GM12878 (cell line): ENCODE measurements at regions of chr20 and their contacts with region 1.

Region 1: DNA sequence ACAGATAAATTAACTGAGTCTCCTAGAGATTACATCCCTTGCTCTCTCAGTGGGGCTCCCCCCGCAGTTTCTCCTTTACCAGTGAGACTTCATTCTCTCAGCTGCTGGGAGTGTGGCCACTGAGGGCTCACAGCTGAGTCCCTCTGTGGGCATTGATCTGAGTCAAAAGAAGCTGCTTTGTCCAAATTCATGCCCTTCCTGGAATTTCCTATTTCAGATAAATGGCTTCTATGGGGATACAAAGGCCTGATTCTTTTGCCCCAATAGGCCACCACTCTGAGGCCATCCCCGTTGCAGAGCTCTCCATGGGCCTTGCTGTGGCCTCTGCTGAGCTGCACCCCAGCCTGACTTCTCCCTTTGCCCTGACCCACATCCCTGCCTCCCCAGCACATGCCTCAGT is 10.0 kb downstream of the CST5 start:
- DNase-seq: no peak
- ATAC-seq: no peak
- H3K4me3 ChIP-seq: no peak overlapping the region
- H3K27ac ChIP-seq: no peak overlapping the region
- H3K4me1 ChIP-seq: no peaks in the 10 kb centered on the region
- H3K27me3 ChIP-seq: peaks cover 0 to under 1% of the 10 kb centered on the region in 2 experiments; a peak in 3 of 4 replicates
- CTCF ChIP-seq: no peak
- EP300 ChIP-seq: no peak
- POLR2A ChIP-seq: no peak
- RAD21 ChIP-seq: no peak

Region 2: GRCh38 chr20:23800878-23801277 is 68.6 kb before region 1 on chr20:
- CTCF ChIA-PET with region 1: no interaction called
- POLR2A ChIA-PET with region 1: no interaction called
- RAD21 ChIA-PET with region 1: no interaction called
- SMC1A ChIA-PET with region 1: no interaction called
- in situ Hi-C with region 1: loop called (anchors 10 kb)
- intact Hi-C with region 1: no loop called
- DNase-seq: no peak
- ATAC-seq: no peak
- H3K4me3 ChIP-seq: no peak overlapping the region
- H3K27ac ChIP-seq: no peak overlapping the region
- H3K4me1 ChIP-seq: no peaks in the 10 kb centered on the region
- H3K27me3 ChIP-seq: no peaks in the 10 kb centered on the region
- CTCF ChIP-seq: no peak
- EP300 ChIP-seq: no peak
- POLR2A ChIP-seq: no peak
- RAD21 ChIP-seq: no peak